Mammary epithelial cell (primary cell): ENCODE measurements at regions of chrX and their contacts with region 1.

Region 1: DNA sequence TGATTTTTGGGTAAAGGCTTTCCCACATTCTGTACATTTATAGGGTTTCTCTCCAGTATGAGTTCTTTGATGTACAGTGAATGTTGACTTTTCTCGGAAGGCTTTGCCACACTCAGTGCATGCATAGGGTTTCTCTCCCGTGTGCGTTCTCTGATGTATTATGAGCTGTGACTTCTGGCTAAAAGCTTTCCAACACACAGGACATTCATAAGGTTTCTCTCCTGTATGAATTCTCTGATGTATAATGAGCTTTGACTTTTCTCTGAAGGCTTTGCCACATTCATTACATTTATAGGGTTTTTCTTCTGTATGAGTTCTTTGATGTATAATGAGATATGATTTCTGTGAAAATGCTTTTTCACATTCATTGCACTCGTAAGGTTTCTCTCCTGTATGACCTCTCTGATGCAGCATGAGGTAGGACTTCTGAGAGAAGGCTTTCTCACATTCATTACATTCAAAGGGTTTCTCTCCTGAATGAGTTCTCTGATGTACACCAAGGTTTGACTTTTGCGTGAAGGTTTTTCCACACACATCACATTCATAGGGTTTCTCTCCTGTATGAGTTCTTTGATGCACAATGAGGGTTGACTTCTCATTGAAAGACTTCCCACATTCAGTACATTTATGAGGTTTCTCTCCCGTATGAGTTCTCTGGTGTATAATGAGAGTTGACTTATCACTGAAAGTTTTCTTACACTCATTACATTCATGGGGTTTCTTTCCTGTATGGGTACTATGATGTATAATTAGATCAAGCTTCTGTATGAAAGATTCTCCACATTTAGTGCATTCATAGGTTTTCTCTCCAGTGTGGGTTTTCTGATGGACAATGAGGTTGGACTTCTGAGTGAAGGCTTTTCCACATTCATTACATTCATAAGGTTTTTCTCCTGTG is 27.3 kb downstream of the ZNF182 start:
- DNase-seq: no peak
- H3K4me3 ChIP-seq: no peak overlapping the region
- H3K27ac ChIP-seq: no peak overlapping the region
- H3K4me1 ChIP-seq: no peaks in the 10 kb centered on the region
- H3K27me3 ChIP-seq: no peaks in the 10 kb centered on the region
- CTCF ChIP-seq: no peak

Region 2: DNA sequence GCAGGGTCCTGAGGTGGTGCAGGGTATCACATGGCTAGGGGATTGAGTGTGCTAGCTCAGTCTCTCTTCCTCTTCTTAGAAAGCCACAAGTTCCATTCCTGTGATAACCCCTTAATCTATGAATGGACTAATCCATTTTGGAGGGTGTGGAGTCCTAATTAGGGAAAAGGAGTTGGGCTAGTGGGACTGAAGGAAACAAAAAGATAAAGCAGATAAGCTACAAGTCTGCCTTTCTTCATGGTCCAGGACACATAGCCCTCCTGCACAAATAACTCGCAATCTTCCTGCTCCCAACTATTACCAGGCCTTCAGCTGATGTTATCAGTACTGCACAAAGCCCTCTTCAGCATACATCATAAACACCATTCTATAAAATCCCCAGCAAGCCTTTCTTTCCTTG is 95.6 kb before region 1 on chrX:
- CTCF ChIA-PET with region 1: no interaction called
- dilution Hi-C with region 1: loop called (anchors 5 kb)
- in situ Hi-C with region 1: no loop called
- intact Hi-C with region 1: no loop called
- DNase-seq: no peak
- H3K4me3 ChIP-seq: no peak overlapping the region
- H3K27ac ChIP-seq: no peak overlapping the region
- H3K4me1 ChIP-seq: no peaks in the 10 kb centered on the region
- H3K27me3 ChIP-seq: no peaks in the 10 kb centered on the region
- CTCF ChIP-seq: no peak

Region 3: GRCh38 chrX:47927212-47927611 is 49.3 kb before region 1 on chrX:
- CTCF ChIA-PET with region 1: no interaction called
- dilution Hi-C with region 1: loop called (anchors 5 kb)
- in situ Hi-C with region 1: no loop called
- intact Hi-C with region 1: no loop called
- DNase-seq: no peak
- H3K4me3 ChIP-seq: no peak overlapping the region
- H3K27ac ChIP-seq: no peak overlapping the region
- H3K4me1 ChIP-seq: no peaks in the 10 kb centered on the region
- H3K27me3 ChIP-seq: no peaks in the 10 kb centered on the region
- CTCF ChIP-seq: no peak

Region 4: GRCh38 chrX:48045410-48046331 is 69.2 kb after region 1 on chrX:
- CTCF ChIA-PET with region 1: no interaction called
- dilution Hi-C with region 1: loop called (anchors 10 kb)
- in situ Hi-C with region 1: no loop called
- intact Hi-C with region 1: no loop called
- DNase-seq: peak; percentile 40
- H3K4me3 ChIP-seq: no peak overlapping the region
- H3K27ac ChIP-seq: no peak overlapping the region
- H3K4me1 ChIP-seq: peaks cover 9% of the 10 kb centered on the region
- H3K27me3 ChIP-seq: no peaks in the 10 kb centered on the region
- CTCF ChIP-seq: no peak